Naive thymus-derived CD4-positive, alpha-beta T cell (primary cell): ENCODE measurements at regions of chr21 and their contacts with region 1.

Region 1: GRCh38 chr21:43646550-43647260 is 12.6 kb downstream of the HSF2BP start:
- DNase-seq: peak; percentile 70 to 84 (median 79)
- ATAC-seq: peak; percentile 100
- H3K4me3 ChIP-seq: no peak overlapping the region
- H3K4me3 Mint-ChIP-seq: peak overlapping the region in 4 of 10 donors; percentile 42 to 71 (median 66)
- H3K27ac ChIP-seq: no peak overlapping the region
- H3K27ac Mint-ChIP-seq: peak overlapping the region in 6 of 9 donors; percentile 30 to 88 (median 58)
- H3K4me1 ChIP-seq: peaks cover 0 to 6% of the 10 kb centered on the region in 2 donors
- H3K4me1 Mint-ChIP-seq: peaks cover 7 to 24% (median 16%) of the 10 kb centered on the region in 7 donors
- H3K27me3 ChIP-seq: no peaks in the 10 kb centered on the region
- H3K27me3 Mint-ChIP-seq: peaks cover 0 to 21% (median 0%) of the 10 kb centered on the region in 5 donors

Region 2: DNA sequence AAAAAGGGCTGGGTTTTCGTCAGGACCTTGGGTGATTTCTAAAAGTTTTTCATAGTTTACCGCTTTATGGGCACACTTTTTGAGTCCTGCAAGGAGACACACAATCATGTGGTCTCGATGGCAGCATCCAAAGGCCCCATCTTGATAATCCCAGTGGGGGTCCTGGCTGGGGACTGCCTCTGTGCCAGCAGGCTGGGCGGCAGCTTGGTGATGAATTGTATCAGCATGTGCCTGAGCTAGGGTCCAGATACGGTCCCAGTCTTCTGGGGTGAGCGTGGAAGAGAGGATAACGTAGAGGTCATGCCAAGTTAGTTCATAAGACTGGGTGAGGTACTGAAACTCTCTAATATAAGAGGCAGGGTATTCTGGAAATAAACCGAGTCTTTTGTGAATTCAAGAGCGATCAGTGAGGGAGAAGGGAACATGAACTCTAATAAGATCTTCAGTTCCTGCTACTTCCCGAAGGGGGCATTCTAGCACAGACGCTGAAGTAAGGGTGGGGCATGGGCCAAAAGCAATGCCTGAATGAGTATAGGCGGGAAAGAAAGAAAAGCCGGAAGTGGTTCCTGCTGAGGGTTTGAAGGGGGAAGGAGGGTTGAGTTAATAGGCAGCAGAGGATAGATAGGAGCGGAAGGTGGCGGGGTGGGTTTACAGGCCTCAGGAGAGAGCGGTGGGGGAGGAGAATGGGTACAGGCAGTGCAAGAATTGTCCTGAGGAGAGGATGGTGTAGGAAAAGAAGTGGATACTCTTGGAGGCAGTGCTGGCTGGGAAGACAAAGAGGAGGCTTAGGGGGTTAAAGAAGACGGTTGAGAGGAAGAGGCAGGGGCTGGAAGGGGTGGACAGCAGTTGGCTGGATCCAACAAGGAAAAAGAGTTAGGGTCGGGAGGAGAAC is 722.9 kb before region 1 on chr21:
- CTCF ChIA-PET with region 1: no interaction called
- POLR2A ChIA-PET with region 1: no interaction called
- intact Hi-C with region 1: loop called (anchors 1 to 5 kb)
- DNase-seq: peak; percentile 19 to 84 (median 75)
- ATAC-seq: peak; percentile 91
- H3K4me3 ChIP-seq: peak overlapping the region; percentile 22
- H3K4me3 Mint-ChIP-seq: peak overlapping the region in 9 of 10 donors; percentile 25 to 85 (median 60)
- H3K27ac ChIP-seq: no peak overlapping the region
- H3K27ac Mint-ChIP-seq: peak overlapping the region; percentile 33 to 92 (median 75)
- H3K4me1 ChIP-seq: peaks cover 9 to 17% of the 10 kb centered on the region in 2 donors
- H3K4me1 Mint-ChIP-seq: peaks cover 10 to 25% (median 20%) of the 10 kb centered on the region in 7 donors
- H3K27me3 ChIP-seq: no peaks in the 10 kb centered on the region
- H3K27me3 Mint-ChIP-seq: no peaks in the 10 kb centered on the region

Region 3: DNA sequence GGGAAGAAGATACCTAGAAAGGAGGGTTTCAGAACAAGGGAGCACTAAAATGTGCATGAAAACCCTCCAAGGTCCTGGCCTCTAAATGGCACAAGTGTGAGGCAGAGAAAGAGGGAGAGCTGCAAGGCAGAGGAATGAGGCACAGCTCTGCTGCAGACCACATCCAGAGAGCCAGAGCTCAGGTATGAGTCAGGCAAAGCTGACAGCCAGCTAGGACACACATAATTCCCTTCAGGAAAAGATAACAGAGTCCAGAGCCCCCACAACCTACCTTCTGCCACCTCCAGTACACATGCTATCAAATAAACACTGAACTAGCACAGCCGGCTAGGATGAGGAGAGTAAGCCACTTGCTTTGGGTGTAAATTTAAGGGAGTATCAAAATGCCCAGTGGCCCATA is 49.7 kb before region 1 on chr21:
- CTCF ChIA-PET with region 1: no interaction called
- POLR2A ChIA-PET with region 1: no interaction called
- intact Hi-C with region 1: loop called in 1 of 2 experiments (anchors 5 kb)
- DNase-seq: no peak
- ATAC-seq: no peak
- H3K4me3 ChIP-seq: no peak overlapping the region
- H3K4me3 Mint-ChIP-seq: no peak overlapping the region
- H3K27ac ChIP-seq: no peak overlapping the region
- H3K27ac Mint-ChIP-seq: no peak overlapping the region
- H3K4me1 ChIP-seq: peaks cover 0 to 2% of the 10 kb centered on the region in 2 donors
- H3K4me1 Mint-ChIP-seq: peaks cover 0 to 16% (median 7%) of the 10 kb centered on the region in 7 donors
- H3K27me3 ChIP-seq: no peaks in the 10 kb centered on the region
- H3K27me3 Mint-ChIP-seq: peaks cover 0 to 36% (median 0%) of the 10 kb centered on the region in 5 donors